T-cell (primary cell): ENCODE measurements at regions of chr18 and their contacts with region 1.

Region 1: DNA sequence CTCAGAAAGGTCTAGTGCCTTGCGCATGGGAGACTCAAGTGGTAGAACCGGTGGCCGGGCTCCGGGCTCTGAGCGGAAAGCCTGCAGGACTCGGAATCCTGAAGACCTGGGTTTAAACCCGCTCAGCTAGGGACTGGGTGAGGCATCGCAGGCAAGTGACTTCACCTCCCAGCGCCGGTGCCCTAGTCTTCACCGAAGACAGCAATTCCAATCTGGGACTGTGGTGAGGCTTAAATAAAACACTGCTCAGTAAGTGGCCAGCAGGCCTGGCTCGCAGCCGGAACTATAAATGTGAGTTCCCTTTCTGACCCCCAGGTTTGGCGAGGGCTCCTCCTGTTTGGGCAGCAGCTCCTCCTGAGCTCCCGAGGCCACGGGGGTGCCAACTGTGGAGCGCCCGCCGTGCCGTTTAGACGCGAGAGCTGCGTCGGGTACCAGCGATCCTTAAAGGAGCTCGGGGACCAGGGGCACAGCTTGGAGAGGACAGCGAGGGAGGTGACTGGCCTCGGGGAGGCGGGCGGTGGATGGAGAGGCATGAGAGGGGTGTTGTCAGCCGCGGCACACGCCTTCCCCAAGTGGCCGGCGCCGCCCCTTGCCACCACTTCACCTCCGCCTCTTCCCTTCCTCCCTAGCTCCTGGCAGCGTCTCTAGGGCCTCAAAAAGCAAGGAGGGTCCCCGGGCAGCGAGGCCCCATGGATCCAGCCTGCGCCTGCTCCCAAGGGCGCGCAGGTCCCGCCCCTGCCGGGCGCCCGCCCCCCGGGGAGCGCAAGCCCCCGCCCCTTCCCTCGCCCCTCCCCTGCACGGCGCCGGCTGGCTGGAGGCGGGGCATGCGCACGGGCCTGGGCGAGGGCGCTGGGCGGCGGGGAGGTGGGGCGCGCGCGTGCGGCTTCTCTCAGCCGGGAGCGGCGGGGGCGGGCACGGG is 736 bp upstream of the MTCL1 start:
- DNase-seq: peak; percentile 47 to 91 (median 68)
- ATAC-seq: peak; percentile 89 to 93 (median 90)
- H3K4me3 ChIP-seq: peak overlapping the region; percentile 75 to 83
- H3K4me3 Mint-ChIP-seq: peak overlapping the region; percentile 86 to 93 (median 89)
- H3K27ac ChIP-seq: no peak overlapping the region
- H3K27ac Mint-ChIP-seq: peak overlapping the region in 1 of 2 donors; percentile 55
- H3K4me1 ChIP-seq: peaks cover 9 to 28% of the 10 kb centered on the region in 2 experiments
- H3K4me1 Mint-ChIP-seq: peaks cover 14 to 24% (median 21%) of the 10 kb centered on the region in 3 donors
- H3K27me3 ChIP-seq: peaks cover 5 to 67% of the 10 kb centered on the region in 2 experiments
- H3K27me3 Mint-ChIP-seq: peaks cover 54 to 69% of the 10 kb centered on the region in 2 donors

Region 2: DNA sequence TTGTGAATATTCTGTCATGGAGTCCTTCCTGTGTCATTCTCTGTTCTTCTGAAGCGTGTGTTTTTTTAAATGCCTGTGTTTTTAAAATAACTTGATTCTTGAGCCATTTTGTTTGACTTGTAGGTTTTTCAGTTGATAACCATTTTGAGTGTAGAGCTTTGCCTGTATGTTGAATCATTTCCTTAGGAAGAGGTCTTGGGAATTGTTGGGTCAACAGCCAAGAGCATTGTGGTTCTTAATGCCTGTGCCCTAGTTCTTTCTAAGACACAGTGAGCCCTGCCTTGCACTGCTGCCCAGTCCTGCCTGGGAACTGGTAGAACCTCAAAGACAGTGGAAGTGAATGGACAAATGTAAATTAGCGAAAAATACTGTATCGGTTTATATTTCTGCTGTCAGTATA is 69.5 kb before region 1 on chr18:
- CTCF ChIA-PET with region 1: no interaction called
- POLR2A ChIA-PET with region 1: no interaction called
- DNase-seq: no peak
- ATAC-seq: no peak
- H3K4me3 ChIP-seq: no peak overlapping the region
- H3K4me3 Mint-ChIP-seq: no peak overlapping the region
- H3K27ac ChIP-seq: no peak overlapping the region
- H3K27ac Mint-ChIP-seq: no peak overlapping the region
- H3K4me1 ChIP-seq: no peaks in the 10 kb centered on the region
- H3K4me1 Mint-ChIP-seq: peaks cover 0 to 3% (median 2%) of the 10 kb centered on the region in 3 donors
- H3K27me3 ChIP-seq: no peaks in the 10 kb centered on the region
- H3K27me3 Mint-ChIP-seq: no peaks in the 10 kb centered on the region

Region 3: GRCh38 chr18:8669571-8669970 is 35.0 kb before region 1 on chr18:
- CTCF ChIA-PET with region 1: interaction called in 1 of 2 experiments, 10 read pairs
- POLR2A ChIA-PET with region 1: no interaction called
- DNase-seq: no peak
- ATAC-seq: no peak
- H3K4me3 ChIP-seq: no peak overlapping the region
- H3K4me3 Mint-ChIP-seq: no peak overlapping the region
- H3K27ac ChIP-seq: no peak overlapping the region
- H3K27ac Mint-ChIP-seq: no peak overlapping the region
- H3K4me1 ChIP-seq: no peaks in the 10 kb centered on the region
- H3K4me1 Mint-ChIP-seq: no peaks in the 10 kb centered on the region
- H3K27me3 ChIP-seq: no peaks in the 10 kb centered on the region
- H3K27me3 Mint-ChIP-seq: no peaks in the 10 kb centered on the region